Right ventricle myocardium inferior (tissue), 1 donor: ENCODE measurements at regions of chr7 and their contacts with region 1.

Region 1: DNA sequence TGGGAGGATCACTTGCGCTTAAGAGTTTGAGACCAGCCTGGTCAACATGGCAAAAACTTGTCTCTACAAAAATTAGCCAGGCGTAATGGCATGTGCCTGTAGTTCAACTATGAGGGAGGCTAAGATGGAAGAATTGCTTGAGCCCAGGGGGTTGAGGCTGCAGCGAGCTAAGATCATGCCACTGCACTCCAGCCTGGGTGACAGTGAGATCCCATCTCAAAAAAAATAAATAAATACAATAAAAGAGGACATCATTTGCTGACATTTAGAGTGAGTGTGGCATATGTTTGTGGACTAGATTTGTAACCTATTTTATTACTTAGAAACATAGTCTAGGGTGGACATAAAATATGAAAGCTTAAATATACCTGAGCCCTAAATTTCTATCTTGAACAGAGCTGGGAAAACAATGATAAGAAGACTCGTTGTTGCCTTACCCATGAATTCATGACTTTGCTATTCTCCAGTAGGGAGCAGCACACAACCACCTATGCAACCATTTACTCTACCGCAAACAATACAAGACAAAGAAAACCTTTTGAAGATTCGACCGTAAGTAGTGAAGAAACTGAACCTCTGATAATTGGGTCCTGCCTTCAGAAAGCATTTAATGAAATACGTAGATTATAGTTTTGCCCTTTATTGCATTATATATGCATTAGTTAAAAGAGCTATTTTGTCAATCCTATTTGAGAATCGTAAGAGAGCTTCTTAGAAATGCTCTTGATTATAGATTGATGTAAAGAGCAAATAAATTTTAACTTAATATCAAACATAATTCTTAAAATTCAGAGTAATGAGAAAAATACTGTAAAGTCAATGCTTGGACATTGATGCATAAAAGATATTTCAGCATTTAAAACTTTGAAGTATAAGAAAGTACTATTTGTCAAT is 83.5 kb downstream of the GNAT3 start:
- DNase-seq: no peak
- ATAC-seq: peak; percentile 81

Region 2: DNA sequence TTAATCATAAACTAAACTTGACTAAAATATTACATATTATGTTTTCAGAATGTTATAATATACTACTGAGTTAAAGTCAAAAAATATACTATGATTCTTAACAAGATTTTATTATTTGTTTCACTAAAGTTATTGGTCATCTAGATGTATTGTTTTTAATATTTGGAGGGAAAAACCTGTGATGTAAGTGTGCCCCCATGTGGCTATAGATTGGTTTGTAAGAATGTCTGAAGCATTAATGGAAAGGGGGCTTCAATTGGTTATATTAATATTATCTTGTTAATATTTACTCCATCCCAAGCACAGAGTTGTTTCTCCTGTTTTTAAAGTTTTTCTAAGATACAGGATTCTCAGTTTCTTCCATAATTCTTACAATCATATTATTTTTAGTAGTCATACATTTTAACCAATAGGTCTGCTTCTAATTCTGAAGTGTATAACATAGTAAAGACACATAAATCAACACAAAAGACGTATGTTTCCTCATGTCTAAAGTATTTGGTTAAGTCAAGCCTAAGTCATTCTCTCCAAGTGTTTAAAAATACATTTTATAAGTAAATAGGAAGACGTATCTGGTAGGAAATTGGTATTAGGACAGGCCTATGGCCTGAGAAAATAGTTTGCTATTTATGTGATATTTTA is 25.4 kb after region 1 on chr7:
- intact Hi-C with region 1: loop called (anchors 2 kb)
- DNase-seq: no peak
- ATAC-seq: no peak

Region 3: GRCh38 chr7:80681272-80681885 is 253.0 kb after region 1 on chr7:
- intact Hi-C with region 1: loop called (anchors 5 kb)
- DNase-seq: no peak
- ATAC-seq: peak; percentile 57

Region 4: GRCh38 chr7:81560708-81561107 is 1132.3 kb after region 1 on chr7:
- intact Hi-C with region 1: no loop called
- DNase-seq: no peak
- ATAC-seq: no peak